Heart left ventricle (tissue), 16 donors: ENCODE measurements at regions of chr5 and their contacts with region 1.

Region 1: DNA sequence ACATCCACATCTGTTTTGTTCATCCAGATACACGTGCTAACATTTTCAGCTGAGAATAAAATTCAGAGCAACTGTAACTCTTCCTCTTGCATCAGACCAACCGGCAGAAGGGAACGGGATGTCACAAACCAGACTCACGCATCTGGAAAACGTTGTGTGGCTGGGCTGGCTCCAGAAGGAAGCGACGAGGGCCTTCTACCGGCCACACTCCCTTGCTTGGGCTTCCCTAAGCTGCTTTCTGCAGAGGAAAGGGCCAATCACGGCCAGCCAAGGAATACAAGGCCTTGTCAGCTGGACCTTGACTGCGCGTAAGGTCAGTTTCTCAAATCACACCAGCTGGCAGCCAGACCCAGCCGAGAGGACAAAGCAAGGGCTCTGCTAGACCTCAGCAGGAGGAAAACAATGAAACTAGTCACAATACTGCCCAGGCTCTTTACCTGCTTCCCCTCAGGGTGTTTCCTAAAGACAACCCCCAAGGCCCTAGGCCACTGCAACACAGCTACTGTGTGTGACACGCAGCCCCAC is 106.1 kb downstream of the THBS4 start:
- DNase-seq: peak; percentile 87 to 93 (median 91)
- ATAC-seq: peak; percentile 85 to 98 (median 96)
- H3K4me3 ChIP-seq: no peak overlapping the region
- H3K27ac ChIP-seq: peak overlapping the region; percentile 64 to 94 (median 84)
- H3K4me1 ChIP-seq: peaks cover 3 to 87% (median 22%) of the 10 kb centered on the region in 12 donors
- H3K27me3 ChIP-seq: no peaks in the 10 kb centered on the region
- CTCF ChIP-seq: peak in 2 of 12 donors; percentile 8 to 30
- POLR2A ChIP-seq: peak in 1 of 2 donors; percentile 26

Region 2: GRCh38 chr5:80101993-80102392 is 39.2 kb before region 1 on chr5:
- intact Hi-C with region 1: loop called in 2 of 10 experiments (anchors 5 kb)
- DNase-seq: no peak
- ATAC-seq: no peak
- H3K4me3 ChIP-seq: no peak overlapping the region
- H3K27ac ChIP-seq: no peak overlapping the region
- H3K4me1 ChIP-seq: peaks cover 0 to 19% (median 0%) of the 10 kb centered on the region in 12 donors
- H3K27me3 ChIP-seq: no peaks in the 10 kb centered on the region
- CTCF ChIP-seq: no peak
- POLR2A ChIP-seq: no peak

Region 3: GRCh38 chr5:80109646-80110478 is 31.3 kb before region 1 on chr5:
- intact Hi-C with region 1: loop called in 1 of 10 experiments (anchors 5 kb)
- DNase-seq: peak in 4 of 5 donors; percentile 77 to 85 (median 80)
- ATAC-seq: peak; percentile 91 to 97 (median 94)
- H3K4me3 ChIP-seq: peak overlapping the region in 2 of 12 donors; percentile 10 to 26
- H3K27ac ChIP-seq: peak overlapping the region in 9 of 12 donors; percentile 26 to 79 (median 59)
- H3K4me1 ChIP-seq: peaks cover 0 to 33% (median 8%) of the 10 kb centered on the region in 12 donors
- H3K27me3 ChIP-seq: no peaks in the 10 kb centered on the region
- CTCF ChIP-seq: no peak
- POLR2A ChIP-seq: no peak

Region 4: GRCh38 chr5:80191991-80192398 is 50.8 kb after region 1 on chr5:
- intact Hi-C with region 1: loop called in 4 of 10 experiments (anchors 5 to 10 kb)
- DNase-seq: peak; percentile 55 to 73 (median 62)
- ATAC-seq: peak; percentile 44 to 73 (median 64)
- H3K4me3 ChIP-seq: peak overlapping the region in 5 of 12 donors; percentile 1 to 22 (median 9)
- H3K27ac ChIP-seq: peak overlapping the region; percentile 67 to 90 (median 80)
- H3K4me1 ChIP-seq: peaks cover 0 to 76% (median 55%) of the 10 kb centered on the region in 12 donors
- H3K27me3 ChIP-seq: no peaks in the 10 kb centered on the region
- CTCF ChIP-seq: no peak
- POLR2A ChIP-seq: no peak

Region 5: DNA sequence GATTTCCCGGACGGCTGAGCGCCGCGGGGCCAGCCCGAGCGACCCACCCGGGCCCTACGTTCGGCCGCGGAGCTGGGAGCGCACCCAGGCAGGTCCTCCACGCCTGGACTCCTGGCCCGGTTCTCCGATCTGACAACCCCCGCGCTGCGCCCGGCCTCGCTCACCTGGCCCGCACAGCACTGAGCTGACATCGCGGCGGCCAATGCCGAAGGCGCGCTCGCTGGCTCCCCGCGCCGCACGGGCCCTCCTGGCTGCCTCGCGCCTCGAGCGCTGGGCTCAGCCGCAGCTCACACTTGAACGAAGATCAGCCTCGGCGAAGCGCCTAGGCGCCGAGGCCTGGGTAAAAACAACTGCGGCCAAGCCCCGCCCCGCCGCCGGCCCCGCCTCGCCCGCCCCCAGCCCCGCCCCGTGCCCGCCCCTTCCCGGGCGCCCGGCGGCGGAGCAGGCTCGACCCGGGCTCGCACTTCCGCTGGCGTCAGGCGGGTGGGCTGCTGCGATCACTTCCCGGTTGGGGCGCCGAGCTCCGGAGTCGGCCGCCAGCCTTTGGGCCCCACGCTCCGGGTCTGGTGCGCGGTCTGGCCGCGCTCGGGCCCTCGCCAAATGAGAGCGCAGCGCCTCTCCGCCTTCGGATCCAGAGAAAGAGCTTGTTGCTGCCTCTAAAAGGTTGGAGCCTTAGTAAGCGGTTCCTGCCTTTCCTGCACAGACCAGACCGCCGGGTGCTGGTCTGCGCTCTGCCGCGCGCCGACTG is 114.7 kb after region 1 on chr5 and contains the start of gene SERINC5:
- intact Hi-C with region 1: loop called in 5 of 10 experiments (anchors 2 to 10 kb)
- DNase-seq: peak; percentile 91 to 95 (median 92)
- ATAC-seq: peak; percentile 76 to 95 (median 90)
- H3K4me3 ChIP-seq: peak within 1 kb of the TSS; percentile 58 to 92 (median 80)
- H3K27ac ChIP-seq: peak within 1 kb of the TSS; percentile 88 to 99 (median 96)
- H3K4me1 ChIP-seq: peaks cover 0 to 47% (median 28%) of the 10 kb centered on the region in 12 donors
- H3K27me3 ChIP-seq: no peaks in the 10 kb centered on the region
- CTCF ChIP-seq: peak in 1 of 12 donors; percentile 4
- POLR2A ChIP-seq: peak; percentile 63 to 95
- total RNA-seq, gene SERINC5: 10.9 to 25.9 (median 14.6) TPM

Region 6: GRCh38 chr5:80407735-80408482 is 266.7 kb after region 1 on chr5 and contains the start of gene ZFYVE16:
- intact Hi-C with region 1: loop called in 1 of 10 experiments (anchors 2 kb)
- DNase-seq: peak; percentile 98 to 99 (median 99)
- ATAC-seq: peak; percentile 96 to 98 (median 97)
- H3K4me3 ChIP-seq: peak within 1 kb of the TSS; percentile 56 to 94 (median 77)
- H3K27ac ChIP-seq: peak within 1 kb of the TSS; percentile 89 to 99 (median 96)
- H3K4me1 ChIP-seq: peaks cover 0 to 52% (median 30%) of the 10 kb centered on the region in 12 donors
- H3K27me3 ChIP-seq: no peaks in the 10 kb centered on the region
- CTCF ChIP-seq: peak in 8 of 12 donors; percentile 9 to 48 (median 28)
- POLR2A ChIP-seq: peak; percentile 44 to 92
- total RNA-seq, gene ZFYVE16: 16.1 to 53.2 (median 39.2) TPM